ENCODE measurements at regions of chr6 and their contacts with region 1.

Region 1: GRCh38 chr6:5422321-5422915 is 161.1 kb downstream of the FARS2 start:
- DNase-seq: no peak
- H3K4me3 ChIP-seq: no peak overlapping the region
- H3K27ac ChIP-seq: no peak overlapping the region
- H3K4me1 ChIP-seq: no peaks in the 10 kb centered on the region
- H3K27me3 ChIP-seq: no peaks in the 10 kb centered on the region
- CTCF ChIP-seq: peak in 1 of 2 experiments; percentile 7

Region 2: DNA sequence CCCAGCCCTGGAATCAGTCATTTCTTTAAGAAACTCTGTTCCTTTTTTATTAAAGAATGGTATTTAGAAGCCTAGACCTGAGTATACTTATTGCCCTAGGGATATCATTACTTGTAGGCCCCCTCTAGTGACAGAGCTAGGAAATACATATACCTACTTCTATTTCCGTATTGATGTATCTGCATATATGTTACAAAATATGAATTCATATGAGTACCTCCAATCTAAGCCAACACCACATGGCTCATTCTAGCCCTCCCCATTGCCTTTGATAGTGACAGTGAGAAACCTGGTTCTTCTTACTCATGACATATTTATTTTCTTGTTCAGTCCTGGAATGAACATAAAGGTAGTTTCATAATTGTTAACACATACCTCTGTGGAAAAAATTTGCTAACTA is 23.9 kb before region 1 on chr6:
- intact Hi-C with region 1: loop called (anchors 1 kb)
- DNase-seq: no peak
- H3K4me3 ChIP-seq: no peak overlapping the region
- H3K27ac ChIP-seq: no peak overlapping the region
- H3K4me1 ChIP-seq: no peaks in the 10 kb centered on the region
- H3K27me3 ChIP-seq: no peaks in the 10 kb centered on the region
- CTCF ChIP-seq: peak in 1 of 2 experiments; percentile 31

Region 3: GRCh38 chr6:5497896-5498578 is 75.6 kb after region 1 on chr6:
- intact Hi-C with region 1: no loop called
- DNase-seq: no peak
- H3K4me3 ChIP-seq: no peak overlapping the region
- H3K27ac ChIP-seq: no peak overlapping the region
- H3K4me1 ChIP-seq: peaks cover 0 to 18% (median 7%) of the 10 kb centered on the region in 4 donors
- H3K27me3 ChIP-seq: no peaks in the 10 kb centered on the region
- CTCF ChIP-seq: no peak

Measured in tibial artery (tissue), 4 donors.